K562 (cell line): ENCODE measurements at regions of chr1 and their contacts with region 1.

Region 1: GRCh38 chr1:150621497-150622302 is 7.7 kb downstream of the ENSA start:
- DNase-seq: peak in 3 of 4 experiments; percentile 26 to 54 (median 31)
- ATAC-seq: no peak
- H3K4me3 ChIP-seq: no peak overlapping the region
- H3K27ac ChIP-seq: peak overlapping the region; percentile 59
- H3K4me1 ChIP-seq: peaks cover 31 to 44% of the 10 kb centered on the region in 2 experiments
- H3K27me3 ChIP-seq: no peaks in the 10 kb centered on the region
- CTCF ChIP-seq: peak; percentile 52 to 74 (median 71)
- EP300 ChIP-seq: no peak
- POLR2A ChIP-seq: 0 out of 2 replicates have a peak, but pooled peaks have one; percentile 28
- RAD21 ChIP-seq: peak; percentile 41 to 58

Region 2: GRCh38 chr1:150521196-150521968 is 100.3 kb before region 1 on chr1:
- CTCF ChIA-PET with region 1: no interaction called
- POLR2A ChIA-PET with region 1: no interaction called
- in situ Hi-C with region 1: no loop called
- intact Hi-C with region 1: no loop called
- DNase-seq: no peak
- ATAC-seq: no peak
- H3K4me3 ChIP-seq: no peak overlapping the region
- H3K27ac ChIP-seq: no peak overlapping the region
- H3K4me1 ChIP-seq: peaks cover 0 to 5% of the 10 kb centered on the region in 2 experiments; a peak in 3 of 5 replicates
- H3K27me3 ChIP-seq: no peaks in the 10 kb centered on the region
- CTCF ChIP-seq: no peak
- EP300 ChIP-seq: no peak
- POLR2A ChIP-seq: no peak
- RAD21 ChIP-seq: no peak

Region 3: DNA sequence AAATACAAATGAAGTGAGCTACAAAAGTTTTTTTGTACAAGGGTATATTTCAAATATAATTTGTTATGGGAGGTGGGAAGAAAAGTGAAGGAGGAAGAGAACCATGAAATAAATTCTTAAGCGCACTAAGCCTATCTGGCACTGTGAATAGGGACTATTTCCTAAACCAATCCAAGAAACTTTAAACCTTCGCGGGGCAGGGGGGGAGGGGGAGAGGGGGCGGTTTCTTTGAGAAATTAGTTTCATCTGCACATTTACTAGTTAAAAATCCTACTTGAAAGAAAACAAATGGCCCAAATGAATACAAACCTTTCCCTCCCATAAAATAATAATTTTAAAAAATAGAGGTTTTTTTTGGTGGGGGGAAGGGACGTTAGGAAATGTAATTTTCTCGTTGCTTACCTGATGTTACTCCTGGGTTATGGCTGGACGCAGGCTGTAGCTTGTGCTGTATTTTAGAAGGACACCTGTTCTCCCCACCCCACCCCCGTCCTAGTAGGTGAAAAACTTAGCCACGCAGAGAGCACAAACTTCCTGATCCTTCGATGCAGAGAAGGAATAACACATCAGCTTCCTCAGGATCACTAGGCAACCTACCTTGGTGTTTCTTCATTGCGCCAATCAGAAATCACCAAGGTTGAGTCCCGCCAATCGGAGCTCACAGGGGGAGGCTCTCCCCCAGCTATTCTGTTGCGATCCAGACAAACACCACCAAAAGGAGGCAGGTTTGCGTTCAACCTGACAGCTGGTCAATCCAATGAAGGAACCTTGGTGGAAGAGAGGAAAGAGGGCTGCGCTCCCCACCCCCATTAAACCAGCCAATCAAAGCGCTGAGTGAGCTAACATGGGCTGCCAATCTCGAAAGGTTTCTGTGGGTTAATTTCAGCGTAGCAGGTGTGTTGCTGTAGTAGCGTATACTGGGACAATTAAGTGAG is 75.2 kb after region 1 on chr1 and contains the start of gene GOLPH3L:
- CTCF ChIA-PET with region 1: no interaction called
- POLR2A ChIA-PET with region 1: interaction called, 3 read pairs
- in situ Hi-C with region 1: no loop called
- intact Hi-C with region 1: loop called (anchors 1 kb)
- DNase-seq: peak; percentile 95 to 99 (median 97)
- ATAC-seq: peak; percentile 99
- H3K4me3 ChIP-seq: peak within 1 kb of the TSS; percentile 55
- H3K27ac ChIP-seq: peak within 1 kb of the TSS; percentile 65
- H3K4me1 ChIP-seq: no peaks in the 10 kb centered on the region; a peak in 1 of 5 replicates
- H3K27me3 ChIP-seq: no peaks in the 10 kb centered on the region
- CTCF ChIP-seq: peak in 1 of 3 experiments; percentile 1; a peak in 1 of 6 replicates
- EP300 ChIP-seq: no peak
- POLR2A ChIP-seq: peak; percentile 76
- RAD21 ChIP-seq: no peak
- polyA plus RNA-seq, gene GOLPH3L: 16.8 to 21.9 TPM

Region 4: GRCh38 chr1:150813058-150813707 is 191.5 kb after region 1 on chr1:
- CTCF ChIA-PET with region 1: interaction called, 3 read pairs
- POLR2A ChIA-PET with region 1: no interaction called
- in situ Hi-C with region 1: no loop called
- intact Hi-C with region 1: loop called (anchors 5 kb)
- DNase-seq: peak; percentile 37 to 78 (median 57)
- ATAC-seq: peak; percentile 98
- H3K4me3 ChIP-seq: no peak overlapping the region
- H3K27ac ChIP-seq: no peak overlapping the region
- H3K4me1 ChIP-seq: peaks cover 0 to 8% of the 10 kb centered on the region in 2 experiments; a peak in 1 of 5 replicates
- H3K27me3 ChIP-seq: no peaks in the 10 kb centered on the region
- CTCF ChIP-seq: peak; percentile 86 to 92 (median 90)
- EP300 ChIP-seq: no peak
- POLR2A ChIP-seq: no peak
- RAD21 ChIP-seq: peak; percentile 85 to 95